Dorsolateral prefrontal cortex (tissue), 120 donors: ENCODE measurements at regions of chr14 and their contacts with region 1.

Region 1: GRCh38 chr14:58072288-58073071 is 79.5 kb downstream of the ARMH4 start:
- DNase-seq: peak in 4 of 10 donors; percentile 24 to 60 (median 35)
- H3K4me3 ChIP-seq: peak overlapping the region in 54 of 59 donors; percentile 2 to 65 (median 46)
- H3K27ac ChIP-seq: no peak overlapping the region
- H3K27me3 ChIP-seq: no peaks in the 10 kb centered on the region
- CTCF ChIP-seq: peak; percentile 55 to 89 (median 79)

Region 2: DNA sequence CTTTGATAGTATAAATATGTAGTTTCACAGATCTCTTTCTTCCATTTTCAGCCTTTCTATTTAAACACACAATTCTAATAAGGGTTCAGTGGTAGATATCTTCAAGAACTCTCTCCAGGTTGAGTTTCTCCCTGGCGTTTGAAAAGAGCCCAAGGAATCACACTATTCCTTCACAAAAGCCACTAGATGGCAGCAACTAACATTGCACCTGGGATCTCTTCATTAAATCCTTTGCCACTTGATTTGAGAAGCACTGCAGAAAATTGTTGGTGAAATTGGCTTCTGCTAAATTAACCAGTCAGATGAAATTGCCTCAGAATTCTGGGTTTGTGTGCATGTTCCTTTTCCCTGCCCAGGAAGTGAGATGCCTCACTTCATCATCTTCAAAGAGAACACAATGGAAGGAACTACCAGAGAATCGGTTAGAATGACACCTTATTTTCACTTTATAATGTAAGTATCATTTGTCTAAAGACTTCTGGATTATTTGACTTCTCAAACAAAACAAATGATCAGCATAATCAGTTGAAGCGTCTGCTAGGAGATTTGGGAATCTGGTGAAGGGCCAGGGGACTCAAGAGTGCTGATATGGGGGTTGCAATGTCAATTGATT is 585.6 kb before region 1 on chr14:
- intact Hi-C with region 1: loop called (anchors 2 to 5 kb)
- DNase-seq: peak in 1 of 10 donors; percentile 42
- H3K4me3 ChIP-seq: no peak overlapping the region
- H3K27ac ChIP-seq: no peak overlapping the region
- H3K27me3 ChIP-seq: peaks cover 0 to 3% (median 0%) of the 10 kb centered on the region in 45 donors
- CTCF ChIP-seq: peak; percentile 38 to 85 (median 66)